ENCODE measurements at regions of chr17 and their contacts with region 1.

Region 1: GRCh38 chr17:64491034-64491859 is 5.6 kb downstream of the POLG2 start:
- DNase-seq: peak; percentile 67
- ATAC-seq: peak; percentile 76
- H3K4me3 ChIP-seq: no peak overlapping the region
- H3K27ac ChIP-seq: no peak overlapping the region
- H3K4me1 ChIP-seq: peaks cover 18% of the 10 kb centered on the region
- H3K27me3 ChIP-seq: no peaks in the 10 kb centered on the region
- CTCF ChIP-seq: peak; percentile 85

Region 2: GRCh38 chr17:64306850-64307463 is 184.3 kb before region 1 on chr17:
- CTCF ChIA-PET with region 1: no interaction called
- POLR2A ChIA-PET with region 1: no interaction called
- intact Hi-C with region 1: loop called (anchors 5 kb)
- DNase-seq: peak; percentile 89
- ATAC-seq: peak; percentile 75
- H3K4me3 ChIP-seq: no peak overlapping the region
- H3K27ac ChIP-seq: no peak overlapping the region
- H3K4me1 ChIP-seq: peaks cover 6% of the 10 kb centered on the region
- H3K27me3 ChIP-seq: no peaks in the 10 kb centered on the region
- CTCF ChIP-seq: peak; percentile 98

Region 3: DNA sequence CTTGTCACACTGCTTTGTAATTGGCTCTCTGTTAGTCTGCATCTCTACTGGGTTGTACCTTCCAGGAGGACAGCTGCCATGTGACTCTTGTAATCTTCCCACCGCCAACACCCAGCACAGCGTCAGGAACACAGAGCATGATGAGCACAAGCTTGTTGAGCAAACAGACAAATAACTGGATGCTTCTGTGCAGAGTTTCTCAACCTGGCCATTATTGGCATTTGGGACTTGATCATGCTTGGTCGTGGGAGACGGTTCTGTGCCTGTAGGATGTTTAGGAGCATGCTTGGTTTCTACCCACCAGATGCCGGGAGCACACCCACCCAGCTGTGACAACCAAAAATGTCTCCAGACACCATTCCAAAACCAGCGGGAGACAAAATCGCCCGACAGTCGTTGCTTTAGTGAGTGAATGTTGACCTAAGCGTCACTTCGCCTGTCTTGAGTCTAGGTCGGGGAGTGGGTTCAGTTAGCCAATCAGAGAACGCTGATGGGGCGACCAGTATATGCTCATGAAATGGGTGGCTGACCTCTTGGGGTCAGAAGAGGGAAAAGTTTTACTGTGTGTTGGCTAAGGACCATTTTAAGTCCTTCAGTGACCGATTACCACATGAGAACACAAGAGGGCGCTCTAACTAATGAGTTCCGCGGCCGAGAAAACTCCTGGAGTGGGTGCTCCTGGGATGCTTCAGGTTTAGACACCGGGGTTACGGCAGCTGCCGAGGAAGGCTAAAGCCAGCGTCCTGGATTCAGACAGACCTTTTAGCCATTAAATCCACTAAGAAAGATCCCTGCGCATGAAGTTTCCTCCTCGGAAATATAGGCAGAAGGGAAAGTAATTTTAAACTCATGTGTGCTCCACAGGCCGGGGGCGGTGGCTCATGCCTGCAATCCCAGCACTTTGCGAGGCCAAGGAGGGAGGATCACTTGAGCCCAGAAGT is 170.4 kb before region 1 on chr17:
- CTCF ChIA-PET with region 1: no interaction called
- POLR2A ChIA-PET with region 1: no interaction called
- intact Hi-C with region 1: loop called (anchors 5 kb)
- DNase-seq: peak; percentile 98
- ATAC-seq: peak; percentile 82
- H3K4me3 ChIP-seq: no peak overlapping the region
- H3K27ac ChIP-seq: peak overlapping the region; percentile 56
- H3K4me1 ChIP-seq: peaks cover 12% of the 10 kb centered on the region
- H3K27me3 ChIP-seq: no peaks in the 10 kb centered on the region
- CTCF ChIP-seq: peak; percentile 96

Region 4: DNA sequence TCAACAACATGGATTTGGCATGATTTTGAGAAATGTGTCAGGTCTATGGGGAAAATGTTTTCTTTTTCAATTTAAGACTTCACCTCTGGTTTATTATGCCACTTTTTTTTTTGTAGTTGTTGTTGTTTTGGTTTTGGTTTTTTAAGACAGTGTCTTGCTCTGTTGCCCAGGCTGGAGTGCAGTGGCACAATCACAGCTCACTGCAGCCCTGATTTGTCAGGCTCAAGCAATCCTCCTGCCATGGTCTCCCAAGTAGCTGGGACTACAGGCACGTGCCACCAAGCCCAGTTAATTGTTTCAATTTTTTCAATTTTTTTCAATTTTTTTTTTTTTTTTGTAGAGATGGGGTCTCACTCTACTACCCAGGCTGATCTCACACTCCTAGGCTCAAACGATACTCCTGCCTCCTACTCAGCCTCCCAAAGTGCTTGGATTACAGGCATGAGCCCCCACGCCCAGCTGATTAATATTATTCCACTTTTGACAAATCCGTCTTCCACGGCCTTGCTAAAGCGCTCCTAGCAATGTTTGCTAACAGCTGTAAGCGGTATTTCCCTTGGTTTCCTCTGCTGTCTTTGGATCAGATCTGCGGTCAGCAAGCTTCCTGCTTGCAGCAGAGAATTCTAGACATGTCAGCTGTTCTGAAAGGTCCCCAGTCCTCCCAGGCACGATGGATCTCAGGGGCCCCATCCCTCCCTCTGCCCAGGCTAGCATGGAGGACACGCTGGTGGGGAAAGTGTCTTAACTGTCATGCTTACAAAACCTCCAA is 49.3 kb before region 1 on chr17:
- CTCF ChIA-PET with region 1: interaction called, 10 read pairs
- POLR2A ChIA-PET with region 1: no interaction called
- intact Hi-C with region 1: no loop called
- DNase-seq: no peak
- ATAC-seq: no peak
- H3K4me3 ChIP-seq: no peak overlapping the region
- H3K27ac ChIP-seq: peak overlapping the region; percentile 80
- H3K4me1 ChIP-seq: peaks cover 22% of the 10 kb centered on the region
- H3K27me3 ChIP-seq: no peaks in the 10 kb centered on the region
- CTCF ChIP-seq: no peak